HEK293 (cell line): ENCODE measurements at regions of chr19 and their contacts with region 1.

Region 1: DNA sequence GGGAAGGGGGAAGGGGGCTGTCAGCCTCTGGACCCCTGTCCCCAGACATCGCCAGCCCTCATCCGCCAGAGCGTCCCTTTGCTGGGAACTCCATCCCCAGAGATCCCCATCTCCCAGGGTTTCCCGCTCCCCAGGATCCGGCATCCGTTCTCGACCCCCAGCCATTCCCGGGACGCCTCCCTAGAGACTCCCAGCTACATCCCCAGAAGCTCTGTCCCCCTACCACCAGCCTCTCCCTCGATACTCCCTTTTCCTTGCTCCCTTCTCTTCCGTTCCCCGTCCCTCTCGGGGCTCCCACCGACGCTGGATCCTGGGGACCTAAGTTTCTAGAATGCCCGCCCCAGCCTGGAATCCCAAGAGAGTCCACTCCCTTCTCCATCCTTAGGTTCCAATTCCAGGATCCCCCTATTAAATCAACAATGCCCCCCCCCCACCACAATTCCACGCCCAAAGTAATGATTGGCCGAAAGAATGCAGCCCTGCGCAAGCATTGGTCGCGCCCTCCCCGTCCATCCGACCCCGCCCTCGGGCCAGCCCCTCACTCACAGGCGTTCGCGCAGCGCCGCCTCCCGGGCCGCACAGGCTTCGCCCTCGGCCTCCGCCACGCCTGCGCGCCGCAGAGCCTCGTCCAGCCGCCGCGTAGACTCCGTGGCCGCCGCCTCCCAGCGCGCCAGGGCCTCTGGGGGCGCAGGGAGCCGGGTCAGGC is 3.2 kb downstream of the CCDC194 start:
- H3K4me3 ChIP-seq: peak overlapping the region; percentile 36
- H3K27ac ChIP-seq: peak overlapping the region; percentile 25; the same call in 1 of the 2 replicates
- H3K4me1 ChIP-seq: peaks cover 3% of the 10 kb centered on the region; the same call in 1 of the 2 replicates
- CTCF ChIP-seq: peak; percentile 78

Region 2: GRCh38 chr19:17296274-17296673 is 94.5 kb before region 1 on chr19:
- CTCF ChIA-PET with region 1: interaction called, 10 read pairs
- POLR2A ChIA-PET with region 1: no interaction called
- H3K4me3 ChIP-seq: no peak overlapping the region
- H3K27ac ChIP-seq: no peak overlapping the region
- H3K4me1 ChIP-seq: no peaks in the 10 kb centered on the region
- CTCF ChIP-seq: no peak

Region 3: DNA sequence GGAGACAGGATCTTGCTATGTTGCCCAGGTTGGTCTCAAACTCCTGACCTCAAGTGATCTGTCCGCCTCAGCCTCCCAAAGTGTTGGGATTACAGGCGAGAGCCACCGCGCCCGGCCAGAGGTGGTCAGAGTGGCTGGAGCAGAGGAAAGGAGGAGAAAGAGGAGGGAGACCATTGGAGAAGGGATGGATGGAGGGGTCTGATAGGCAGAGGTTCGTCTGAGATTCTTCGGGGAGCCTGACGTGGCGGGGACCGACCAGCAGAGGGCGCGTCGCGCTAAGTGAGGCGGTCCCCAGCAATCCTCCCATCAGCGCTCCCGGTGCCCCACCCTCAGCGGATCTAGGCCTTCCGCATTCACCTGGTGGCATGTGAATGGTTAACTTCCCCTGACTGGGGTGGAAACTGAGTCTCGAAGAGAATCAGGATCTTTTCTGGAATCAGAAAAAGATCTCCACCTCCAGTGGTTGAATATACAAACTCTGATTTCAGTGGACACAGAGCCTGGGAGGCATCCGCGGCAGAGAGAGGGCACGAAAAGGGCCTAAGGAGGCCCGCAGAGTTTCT is 44.6 kb before region 1 on chr19:
- CTCF ChIA-PET with region 1: interaction called, 17 read pairs
- POLR2A ChIA-PET with region 1: no interaction called
- H3K4me3 ChIP-seq: no peak overlapping the region
- H3K27ac ChIP-seq: no peak overlapping the region
- H3K4me1 ChIP-seq: no peaks in the 10 kb centered on the region
- CTCF ChIP-seq: peak; percentile 92

Region 4: GRCh38 chr19:17479325-17479791 is 88.5 kb after region 1 on chr19:
- CTCF ChIA-PET with region 1: no interaction called
- POLR2A ChIA-PET with region 1: no interaction called
- H3K4me3 ChIP-seq: no peak overlapping the region
- H3K27ac ChIP-seq: no peak overlapping the region
- H3K4me1 ChIP-seq: no peaks in the 10 kb centered on the region
- CTCF ChIP-seq: no peak

Region 5: GRCh38 chr19:17539238-17540117 is 148.7 kb after region 1 on chr19:
- CTCF ChIA-PET with region 1: no interaction called
- POLR2A ChIA-PET with region 1: no interaction called
- H3K4me3 ChIP-seq: peak overlapping the region; percentile 37
- H3K27ac ChIP-seq: no peak overlapping the region
- H3K4me1 ChIP-seq: no peaks in the 10 kb centered on the region
- CTCF ChIP-seq: peak; percentile 81